Psoas muscle (tissue), 8 donors: ENCODE measurements at regions of chr4 and their contacts with region 1.

Region 1: GRCh38 chr4:8123389-8123788 is 35.2 kb downstream of the ABLIM2 start:
- DNase-seq: peak in 1 of 2 donors; percentile 80
- ATAC-seq: peak; percentile 8 to 34 (median 20)
- H3K4me3 ChIP-seq: peak overlapping the region; percentile 79
- H3K27ac ChIP-seq: peak overlapping the region; percentile 98
- H3K4me1 ChIP-seq: peaks cover 66% of the 10 kb centered on the region
- H3K27me3 ChIP-seq: no peaks in the 10 kb centered on the region
- CTCF ChIP-seq: no peak

Region 2: GRCh38 chr4:7571701-7572100 is 551.7 kb before region 1 on chr4:
- intact Hi-C with region 1: no loop called
- DNase-seq: no peak
- ATAC-seq: no peak
- H3K4me3 ChIP-seq: no peak overlapping the region
- H3K27ac ChIP-seq: no peak overlapping the region
- H3K4me1 ChIP-seq: no peaks in the 10 kb centered on the region
- H3K27me3 ChIP-seq: peaks cover 0 to 4% (median 0%) of the 10 kb centered on the region in 3 donors
- CTCF ChIP-seq: no peak

Region 3: DNA sequence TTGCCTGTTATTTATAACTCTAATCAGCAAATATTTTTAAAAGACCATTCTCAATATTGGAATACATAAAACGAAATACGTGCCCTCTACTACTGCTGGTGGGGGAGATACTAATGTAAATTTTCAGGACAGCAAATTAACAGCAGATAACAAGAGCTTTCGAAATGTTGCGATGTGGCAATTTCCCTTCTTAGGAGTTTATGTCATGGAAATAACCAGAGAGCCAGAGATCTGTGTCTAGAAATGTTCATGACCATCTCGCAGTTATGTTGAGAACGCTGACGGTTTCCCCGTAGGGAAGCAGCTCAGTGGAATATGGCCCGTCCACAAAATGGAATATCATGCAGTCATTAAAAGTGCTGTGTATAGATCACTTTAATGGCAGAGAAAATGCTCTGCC is 450.3 kb before region 1 on chr4:
- intact Hi-C with region 1: no loop called
- DNase-seq: peak in 1 of 2 donors; percentile 1
- ATAC-seq: no peak
- H3K4me3 ChIP-seq: no peak overlapping the region
- H3K27ac ChIP-seq: no peak overlapping the region
- H3K4me1 ChIP-seq: no peaks in the 10 kb centered on the region
- H3K27me3 ChIP-seq: peaks cover 0 to 5% (median 0%) of the 10 kb centered on the region in 3 donors
- CTCF ChIP-seq: no peak

Region 4: DNA sequence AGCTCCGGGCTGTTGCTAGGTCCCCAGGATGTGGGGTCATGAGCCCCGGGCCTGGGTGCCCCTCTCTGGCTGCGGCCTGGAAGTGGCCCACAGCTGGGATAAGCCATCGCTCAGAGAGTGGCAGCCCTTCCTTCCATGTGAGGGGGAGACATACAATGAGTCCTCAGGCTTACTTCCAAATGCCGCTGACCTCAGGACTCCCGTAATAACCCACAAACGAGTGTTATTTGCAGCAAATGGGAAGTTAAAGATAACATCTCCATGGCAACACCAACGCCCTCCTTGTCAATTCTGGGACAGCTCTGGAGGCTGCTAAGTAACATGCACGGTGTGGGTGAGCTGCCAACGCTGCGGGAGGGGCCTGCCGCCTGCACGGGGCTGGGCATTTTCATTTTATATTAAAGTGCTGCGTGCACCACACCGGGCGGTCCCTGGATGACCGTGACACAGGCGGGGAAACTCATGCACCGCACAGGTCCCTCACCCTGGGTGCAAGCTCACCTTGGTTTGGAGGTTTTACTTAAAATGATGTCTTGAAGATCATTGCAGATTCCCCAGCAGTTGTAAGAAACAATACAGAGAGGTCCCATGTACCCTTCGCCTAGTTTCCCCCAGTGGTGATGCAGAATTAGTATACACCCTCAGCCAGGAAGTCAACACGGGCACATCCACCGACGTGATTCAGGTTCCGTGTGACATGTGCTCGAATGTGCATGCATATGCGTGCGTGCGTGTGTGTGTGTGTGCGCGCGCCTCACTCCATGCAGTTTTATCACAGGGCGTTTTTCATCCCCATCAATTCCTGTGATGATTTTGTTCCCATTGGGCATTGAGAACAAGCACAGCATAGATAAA is 44.1 kb before region 1 on chr4:
- intact Hi-C with region 1: no loop called
- DNase-seq: peak; percentile 16 to 58
- ATAC-seq: peak in 2 of 4 donors; percentile 4 to 5
- H3K4me3 ChIP-seq: no peak overlapping the region
- H3K27ac ChIP-seq: no peak overlapping the region
- H3K4me1 ChIP-seq: no peaks in the 10 kb centered on the region
- H3K27me3 ChIP-seq: no peaks in the 10 kb centered on the region
- CTCF ChIP-seq: no peak

Region 5: DNA sequence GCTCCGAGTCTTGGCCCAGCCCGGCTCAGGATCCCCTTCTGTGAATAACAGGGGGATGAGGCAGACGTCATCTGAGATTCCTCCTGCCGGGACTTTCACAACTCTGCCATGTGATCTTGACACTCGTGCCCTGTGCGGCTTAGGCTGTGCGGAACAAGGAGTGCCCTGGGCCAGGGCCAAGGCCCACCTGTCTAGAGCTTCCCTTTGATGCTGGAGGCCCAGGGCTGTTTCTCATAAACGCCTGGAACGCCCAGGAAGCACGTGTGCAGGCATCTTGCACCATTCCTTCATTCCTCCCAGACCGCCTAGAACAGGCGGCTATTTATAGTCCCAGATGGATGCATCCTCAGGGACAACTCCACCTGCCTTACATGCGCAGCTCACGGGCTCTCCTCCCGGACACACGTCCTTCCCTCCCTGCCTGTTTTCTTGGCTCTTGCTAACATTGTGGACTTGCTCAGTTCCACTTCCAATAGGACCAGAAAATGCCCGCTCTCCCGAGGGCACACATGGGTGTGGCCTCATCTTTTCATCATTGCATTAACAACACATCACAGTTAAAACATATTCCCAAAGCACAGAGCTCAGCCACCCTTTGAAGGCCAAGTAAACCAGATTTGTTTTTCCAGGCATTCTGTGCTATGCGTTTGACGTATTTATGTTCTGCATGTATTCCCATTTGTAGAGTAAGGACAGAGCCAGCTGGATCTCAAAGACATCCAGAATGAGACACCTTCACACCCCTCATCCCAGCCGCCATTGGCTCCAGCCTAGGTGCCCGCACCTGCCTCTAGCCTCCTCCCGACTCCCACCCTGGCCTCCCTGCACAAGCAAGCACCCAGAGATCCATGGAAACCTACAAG is 21.9 kb before region 1 on chr4:
- intact Hi-C with region 1: loop called in 1 of 2 experiments (anchors 1 kb)
- DNase-seq: peak; percentile 93 to 98
- ATAC-seq: peak; percentile 57 to 82 (median 64)
- H3K4me3 ChIP-seq: no peak overlapping the region
- H3K27ac ChIP-seq: peak overlapping the region; percentile 90
- H3K4me1 ChIP-seq: peaks cover 64% of the 10 kb centered on the region
- H3K27me3 ChIP-seq: no peaks in the 10 kb centered on the region
- CTCF ChIP-seq: no peak

Region 6: GRCh38 chr4:8141935-8142334 is 18.5 kb after region 1 on chr4:
- intact Hi-C with region 1: loop called in 1 of 2 experiments (anchors 2 kb)
- DNase-seq: no peak
- ATAC-seq: peak; percentile 33 to 56 (median 52)
- H3K4me3 ChIP-seq: peak overlapping the region; percentile 12
- H3K27ac ChIP-seq: peak overlapping the region; percentile 88
- H3K4me1 ChIP-seq: peaks cover 59% of the 10 kb centered on the region
- H3K27me3 ChIP-seq: no peaks in the 10 kb centered on the region
- CTCF ChIP-seq: no peak

Region 7: DNA sequence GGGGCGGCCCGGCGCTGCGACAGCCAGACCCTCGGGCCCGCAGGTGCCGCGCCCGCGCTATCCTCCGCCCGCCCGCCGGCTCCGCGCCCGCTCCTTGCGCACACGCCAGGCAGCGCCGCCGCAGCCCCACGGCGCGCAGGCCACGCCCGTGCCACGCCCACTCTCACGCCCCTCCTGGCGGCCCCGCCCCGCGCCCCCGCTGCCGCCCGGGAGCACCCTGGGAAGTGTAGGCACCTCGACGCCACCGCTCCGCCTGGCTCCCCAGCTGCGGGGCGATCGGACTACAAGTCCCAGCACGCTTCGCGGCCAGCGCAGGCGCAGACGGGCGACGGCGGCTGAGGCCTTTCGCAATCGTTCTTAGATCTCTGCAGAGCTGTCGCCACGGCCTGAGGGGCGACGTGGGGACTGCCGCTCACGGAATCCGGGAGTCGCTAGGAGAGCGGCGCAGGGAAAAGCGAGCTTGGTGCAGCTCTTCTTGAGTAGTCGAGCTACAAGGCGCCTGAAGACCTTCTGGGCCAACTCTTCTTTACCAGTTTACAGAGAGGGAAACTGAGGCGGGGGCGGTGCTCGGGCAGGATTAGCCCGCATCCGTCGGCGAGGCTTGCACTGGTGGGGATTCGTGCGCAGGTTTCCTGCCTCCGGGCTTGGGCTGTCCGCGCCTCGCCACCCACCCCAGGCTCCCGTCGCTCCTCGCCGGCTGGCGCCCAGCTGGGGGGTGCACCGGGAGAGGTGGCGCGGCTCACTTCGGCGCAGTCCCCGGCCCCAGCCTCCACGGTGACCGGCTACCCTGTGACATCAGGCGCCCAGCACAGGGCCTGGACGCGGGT is 35.5 kb after region 1 on chr4 and contains the start of gene ABLIM2:
- intact Hi-C with region 1: loop called (anchors 2 to 5 kb)
- DNase-seq: peak; percentile 98 to 99
- ATAC-seq: peak; percentile 76 to 92 (median 82)
- H3K4me3 ChIP-seq: peak within 1 kb of the TSS; percentile 87
- H3K27ac ChIP-seq: peak within 1 kb of the TSS; percentile 85
- H3K4me1 ChIP-seq: peaks cover 45% of the 10 kb centered on the region
- H3K27me3 ChIP-seq: no peaks in the 10 kb centered on the region
- CTCF ChIP-seq: no peak
- total RNA-seq, gene ABLIM2: 127 to 956 (median 461) TPM

Region 8: GRCh38 chr4:8168232-8168631 is 44.8 kb after region 1 on chr4:
- intact Hi-C with region 1: loop called in 1 of 2 experiments (anchors 2 kb)
- DNase-seq: no peak
- ATAC-seq: no peak
- H3K4me3 ChIP-seq: no peak overlapping the region
- H3K27ac ChIP-seq: peak overlapping the region; percentile 97
- H3K4me1 ChIP-seq: peaks cover 64% of the 10 kb centered on the region
- H3K27me3 ChIP-seq: no peaks in the 10 kb centered on the region
- CTCF ChIP-seq: peak; percentile 59

Region 9: GRCh38 chr4:8181844-8182243 is 58.5 kb after region 1 on chr4:
- intact Hi-C with region 1: no loop called
- DNase-seq: no peak
- ATAC-seq: peak in 1 of 4 donors; percentile 24
- H3K4me3 ChIP-seq: no peak overlapping the region
- H3K27ac ChIP-seq: no peak overlapping the region
- H3K4me1 ChIP-seq: peaks cover 26% of the 10 kb centered on the region
- H3K27me3 ChIP-seq: no peaks in the 10 kb centered on the region
- CTCF ChIP-seq: no peak